ENCODE measurements at regions of chr6 and their contacts with region 1.

Region 1: DNA sequence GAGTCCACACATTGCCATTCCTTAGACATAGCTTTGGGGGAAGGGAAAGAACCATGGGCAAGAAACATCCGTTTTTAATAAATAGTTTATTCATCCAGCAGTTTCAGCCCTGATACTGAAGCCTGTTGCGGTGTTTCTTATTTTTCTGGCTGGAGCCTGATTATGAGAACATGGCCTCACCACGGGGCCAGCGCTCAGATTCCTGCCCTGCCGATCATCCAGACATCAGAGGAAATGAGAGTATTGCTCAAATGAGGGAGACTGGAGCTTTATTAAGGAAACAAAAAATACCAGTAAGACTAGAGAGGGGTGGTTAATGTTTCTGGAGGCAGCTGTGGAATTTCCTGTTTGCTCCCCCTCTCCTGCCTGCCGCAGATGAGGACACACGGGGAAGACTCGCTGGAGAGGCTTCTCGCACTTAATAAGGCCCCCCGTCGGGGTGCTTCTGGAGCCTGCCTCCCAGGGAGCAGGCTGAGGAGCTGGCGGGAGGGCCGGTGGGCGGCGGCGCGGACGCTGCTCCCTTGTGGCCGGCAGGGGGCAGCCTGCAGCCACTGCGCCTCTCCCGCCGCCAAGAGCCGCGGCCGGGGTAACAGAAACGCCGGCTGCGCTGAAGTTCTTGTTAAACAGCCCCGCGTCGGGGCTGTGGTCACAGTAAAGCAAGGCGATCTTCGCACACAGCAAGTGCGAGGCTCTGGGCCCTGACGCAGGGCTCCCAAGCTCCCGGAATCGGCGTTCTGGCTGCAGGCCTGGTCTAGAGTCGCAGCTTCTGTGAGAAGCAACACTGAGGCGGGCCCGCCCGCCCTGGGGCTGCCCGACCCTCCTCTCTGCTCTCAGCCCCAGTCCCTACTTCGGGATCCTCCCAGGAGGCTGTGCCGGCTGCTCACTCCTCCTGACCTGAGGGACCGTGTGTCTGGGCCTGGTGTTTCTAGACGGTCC is 17.5 kb downstream of the LEMD2 start:
- DNase-seq: peak; percentile 76 to 79
- H3K4me3 ChIP-seq: no peak overlapping the region
- H3K27ac ChIP-seq: 0 out of 2 replicates have a peak overlapping the region, but pooled peaks have one; percentile 15
- H3K4me1 ChIP-seq: peaks cover 19% of the 10 kb centered on the region
- H3K27me3 ChIP-seq: no peaks in the 10 kb centered on the region
- CTCF ChIP-seq: peak; percentile 90

Region 2: GRCh38 chr6:34027445-34027936 is 256.1 kb after region 1 on chr6:
- CTCF ChIA-PET with region 1: interaction called, 3 read pairs
- POLR2A ChIA-PET with region 1: no interaction called
- intact Hi-C with region 1: loop called (anchors 1 kb)
- DNase-seq: peak in 1 of 2 experiments; percentile 52
- H3K4me3 ChIP-seq: no peak overlapping the region
- H3K27ac ChIP-seq: no peak overlapping the region
- H3K4me1 ChIP-seq: no peaks in the 10 kb centered on the region
- H3K27me3 ChIP-seq: peaks cover 96% of the 10 kb centered on the region
- CTCF ChIP-seq: peak; percentile 82

Region 3: DNA sequence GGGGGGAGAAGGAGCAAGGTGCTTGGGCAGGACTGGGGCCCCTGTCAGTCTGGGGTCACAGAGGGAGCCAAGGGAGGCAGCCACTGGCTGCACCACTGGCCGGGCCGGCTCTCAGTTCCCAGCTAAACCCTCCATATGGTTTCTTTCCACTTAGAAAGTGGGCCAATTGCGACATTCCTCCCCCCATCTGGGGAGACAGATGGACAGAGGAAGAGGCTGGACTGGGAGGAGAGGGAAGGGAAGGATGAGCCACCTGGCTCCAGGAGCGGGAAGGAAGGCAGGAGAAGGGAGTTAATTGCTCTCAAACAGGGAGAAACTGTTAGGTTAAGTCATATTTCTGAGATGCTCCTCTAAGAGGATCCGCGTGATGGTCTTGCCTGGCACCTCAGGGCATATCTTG is 292.2 kb after region 1 on chr6:
- CTCF ChIA-PET with region 1: no interaction called
- POLR2A ChIA-PET with region 1: no interaction called
- intact Hi-C with region 1: loop called (anchors 1 kb)
- DNase-seq: no peak
- H3K4me3 ChIP-seq: no peak overlapping the region
- H3K27ac ChIP-seq: no peak overlapping the region
- H3K4me1 ChIP-seq: no peaks in the 10 kb centered on the region
- H3K27me3 ChIP-seq: peaks cover 94% of the 10 kb centered on the region
- CTCF ChIP-seq: no peak

Region 4: GRCh38 chr6:34154668-34155447 is 383.4 kb after region 1 on chr6:
- CTCF ChIA-PET with region 1: interaction called, 7 read pairs
- POLR2A ChIA-PET with region 1: no interaction called
- intact Hi-C with region 1: loop called (anchors 2 kb)
- DNase-seq: peak in 1 of 2 experiments; percentile 50
- H3K4me3 ChIP-seq: peak overlapping the region; percentile 39; the same call in 1 of the 2 replicates
- H3K27ac ChIP-seq: no peak overlapping the region
- H3K4me1 ChIP-seq: no peaks in the 10 kb centered on the region
- H3K27me3 ChIP-seq: peaks cover 42% of the 10 kb centered on the region
- CTCF ChIP-seq: peak; percentile 96